ENCODE measurements at regions of chr13 and their contacts with region 1.

Region 1: GRCh38 chr13:35157143-35157755 is 215.2 kb downstream of the NBEA start:
- DNase-seq: peak in 3 of 9 experiments; percentile 5 to 47 (median 29)
- ATAC-seq: no peak
- H3K4me3 ChIP-seq: no peak overlapping the region
- H3K4me3 Mint-ChIP-seq: no peak overlapping the region
- H3K27ac ChIP-seq: no peak overlapping the region
- H3K27ac Mint-ChIP-seq: no peak overlapping the region
- H3K4me1 ChIP-seq: no peaks in the 10 kb centered on the region
- H3K4me1 Mint-ChIP-seq: peaks cover 4% of the 10 kb centered on the region
- H3K27me3 ChIP-seq: no peaks in the 10 kb centered on the region
- H3K27me3 Mint-ChIP-seq: no peaks in the 10 kb centered on the region
- CTCF ChIP-seq: peak; percentile 49

Region 2: DNA sequence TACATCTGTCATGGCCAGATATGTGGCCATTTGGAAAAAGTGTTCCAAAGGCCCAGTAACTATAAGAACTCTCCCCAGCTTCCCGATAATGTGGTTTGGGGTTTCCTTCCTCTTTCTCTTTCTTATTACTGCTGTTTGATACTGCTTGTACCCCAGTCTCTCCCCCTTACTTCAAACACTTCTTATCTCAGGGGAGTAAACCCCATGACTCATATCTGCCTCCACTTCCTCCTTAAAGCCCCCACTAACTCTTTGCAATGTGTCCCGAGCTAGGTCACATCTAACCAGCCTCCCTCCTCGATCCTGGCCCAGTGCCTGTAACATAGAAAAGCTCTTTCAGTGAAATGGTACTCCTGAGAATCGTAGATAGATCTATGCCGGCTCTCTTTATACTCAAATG is 1789.3 kb before region 1 on chr13:
- CTCF ChIA-PET with region 1: no interaction called
- POLR2A ChIA-PET with region 1: no interaction called
- intact Hi-C with region 1: loop called in 1 of 2 experiments (anchors 5 kb)
- DNase-seq: peak in 1 of 9 experiments; percentile 3
- ATAC-seq: no peak
- H3K4me3 ChIP-seq: no peak overlapping the region
- H3K4me3 Mint-ChIP-seq: no peak overlapping the region
- H3K27ac ChIP-seq: no peak overlapping the region
- H3K27ac Mint-ChIP-seq: no peak overlapping the region
- H3K4me1 ChIP-seq: no peaks in the 10 kb centered on the region
- H3K4me1 Mint-ChIP-seq: peaks cover 8% of the 10 kb centered on the region
- H3K27me3 ChIP-seq: no peaks in the 10 kb centered on the region
- H3K27me3 Mint-ChIP-seq: peaks cover 5% of the 10 kb centered on the region
- CTCF ChIP-seq: no peak

Region 3: DNA sequence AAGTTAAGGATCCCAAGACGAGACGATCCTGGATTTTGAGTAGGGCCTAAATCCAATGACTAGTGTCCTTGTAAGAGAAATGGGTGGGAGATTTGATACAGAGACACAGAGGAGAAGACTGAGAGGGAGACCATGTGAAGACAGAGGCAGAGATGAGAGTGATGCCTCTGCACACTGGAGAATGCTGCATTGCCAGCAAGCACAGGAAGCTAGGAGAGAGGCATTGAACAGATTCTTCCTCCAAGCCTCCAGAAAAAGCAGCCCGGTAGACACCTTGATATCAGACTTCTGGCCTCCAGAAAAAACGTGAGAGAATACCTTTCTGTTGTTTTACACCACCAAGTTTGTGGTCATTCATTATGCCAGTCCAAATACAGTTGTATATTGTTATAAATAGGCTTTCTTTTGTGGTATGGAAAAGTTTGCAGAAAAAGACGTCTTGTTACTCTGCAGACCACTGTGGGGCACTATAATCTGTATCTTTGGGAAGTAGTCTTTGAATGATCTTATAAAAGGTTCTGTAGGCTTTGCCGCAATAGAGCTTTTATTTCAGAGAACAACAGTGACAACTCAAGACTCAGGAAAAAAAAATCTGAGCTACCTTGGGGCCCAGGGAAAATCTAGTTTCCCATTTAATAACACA is 1357.2 kb before region 1 on chr13:
- CTCF ChIA-PET with region 1: no interaction called
- POLR2A ChIA-PET with region 1: no interaction called
- intact Hi-C with region 1: loop called in 1 of 2 experiments (anchors 10 kb)
- DNase-seq: peak in 2 of 9 experiments; percentile 13 to 44
- ATAC-seq: no peak
- H3K4me3 ChIP-seq: no peak overlapping the region
- H3K4me3 Mint-ChIP-seq: no peak overlapping the region
- H3K27ac ChIP-seq: no peak overlapping the region
- H3K27ac Mint-ChIP-seq: no peak overlapping the region
- H3K4me1 ChIP-seq: no peaks in the 10 kb centered on the region
- H3K4me1 Mint-ChIP-seq: no peaks in the 10 kb centered on the region
- H3K27me3 ChIP-seq: no peaks in the 10 kb centered on the region
- H3K27me3 Mint-ChIP-seq: peaks cover 5% of the 10 kb centered on the region
- CTCF ChIP-seq: no peak

Measured in CD8-positive, alpha-beta T cell (primary cell).